Activated B cell treated with CpG ODN at 0.5 μM for 24 hours (primary cell): ENCODE measurements at regions of chr9 and their contacts with region 1.

Region 1: GRCh38 chr9:128818099-128818838 is at the start of gene ENDOG:
- DNase-seq: peak; percentile 98
- ATAC-seq: peak; percentile 95
- H3K4me3 Mint-ChIP-seq: peak within 1 kb of the TSS; percentile 87
- H3K27ac Mint-ChIP-seq: peak within 1 kb of the TSS; percentile 87
- H3K4me1 Mint-ChIP-seq: peaks cover 15% of the 10 kb centered on the region
- H3K27me3 Mint-ChIP-seq: no peaks in the 10 kb centered on the region
- CTCF ChIP-seq: no peak
- total RNA-seq, gene ENDOG: 14.6 and 16.9 TPM in 2 replicates

Region 2: DNA sequence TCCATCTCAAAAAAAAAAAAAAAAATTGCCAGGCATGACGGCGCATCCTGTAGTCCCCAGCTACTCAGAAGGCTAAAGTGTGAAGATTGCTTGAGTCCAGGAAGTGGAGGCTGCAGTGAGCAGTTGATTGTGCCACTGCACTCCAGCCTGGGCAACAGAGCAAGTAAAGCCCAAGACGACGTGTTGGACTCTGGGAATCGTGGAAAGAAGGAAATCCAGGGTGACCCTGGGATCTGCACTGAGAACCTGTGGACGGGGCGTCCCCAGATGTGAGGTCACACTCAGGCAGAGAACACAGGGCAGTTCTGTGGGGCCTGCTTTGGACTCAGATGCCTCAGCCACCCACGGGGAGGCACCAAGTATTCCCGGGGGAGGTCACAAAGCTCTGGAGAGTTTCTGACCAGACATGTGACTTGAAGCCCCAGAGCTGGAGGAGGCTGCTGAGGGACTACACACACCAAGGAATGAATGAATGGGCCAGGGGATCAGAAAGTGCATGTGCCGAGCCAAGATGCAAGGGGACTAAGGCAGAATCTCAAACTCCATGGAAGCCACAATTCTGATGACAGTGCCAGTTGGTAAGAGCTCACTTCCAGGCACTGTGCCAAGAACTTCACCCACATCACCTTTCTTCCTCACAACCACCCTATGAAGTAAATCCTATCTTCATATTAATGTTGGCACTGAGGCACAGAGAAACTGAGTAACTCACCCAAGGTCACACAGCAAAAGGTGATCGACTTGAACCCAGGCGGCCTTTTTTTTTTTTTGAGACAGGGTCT is 174.6 kb before region 1 on chr9:
- CTCF ChIA-PET with region 1: no interaction called
- POLR2A ChIA-PET with region 1: interaction called, 3 read pairs
- intact Hi-C with region 1: loop called (anchors 2 kb)
- DNase-seq: peak; percentile 44
- ATAC-seq: peak; percentile 84
- H3K4me3 Mint-ChIP-seq: peak overlapping the region; percentile 45
- H3K27ac Mint-ChIP-seq: peak overlapping the region; percentile 84
- H3K4me1 Mint-ChIP-seq: peaks cover 23% of the 10 kb centered on the region
- H3K27me3 Mint-ChIP-seq: no peaks in the 10 kb centered on the region
- CTCF ChIP-seq: no peak

Region 3: GRCh38 chr9:128771745-128772519 is 46.3 kb before region 1 on chr9 and contains the start of gene ZER1:
- CTCF ChIA-PET with region 1: no interaction called
- POLR2A ChIA-PET with region 1: interaction called, 17 read pairs
- intact Hi-C with region 1: loop called (anchors 1 kb)
- DNase-seq: peak; percentile 96
- ATAC-seq: peak; percentile 93
- H3K4me3 Mint-ChIP-seq: peak within 1 kb of the TSS; percentile 92
- H3K27ac Mint-ChIP-seq: peak within 1 kb of the TSS; percentile 89
- H3K4me1 Mint-ChIP-seq: peaks cover 24% of the 10 kb centered on the region
- H3K27me3 Mint-ChIP-seq: no peaks in the 10 kb centered on the region
- CTCF ChIP-seq: no peak
- total RNA-seq, gene ZER1: 24.0 and 26.0 TPM in 2 replicates

Region 4: GRCh38 chr9:128829477-128830251 is 11.4 kb after region 1 on chr9 and contains the start of gene SPOUT1:
- CTCF ChIA-PET with region 1: interaction called, 12 read pairs
- POLR2A ChIA-PET with region 1: interaction called, 49 read pairs
- intact Hi-C with region 1: loop called (anchors 1 kb)
- DNase-seq: peak; percentile 92
- ATAC-seq: peak; percentile 99
- H3K4me3 Mint-ChIP-seq: peak within 1 kb of the TSS; percentile 94
- H3K27ac Mint-ChIP-seq: peak within 1 kb of the TSS; percentile 90
- H3K4me1 Mint-ChIP-seq: peaks cover 22% of the 10 kb centered on the region
- H3K27me3 Mint-ChIP-seq: no peaks in the 10 kb centered on the region
- CTCF ChIP-seq: no peak
- total RNA-seq, gene SPOUT1: 78.9 and 79.1 TPM in 2 replicates

Region 5: GRCh38 chr9:128947422-128948301 is 129.4 kb after region 1 on chr9 and contains the starts of genes DOLK and NUP188:
- CTCF ChIA-PET with region 1: interaction called, 4 read pairs
- POLR2A ChIA-PET with region 1: interaction called, 4 read pairs
- intact Hi-C with region 1: loop called (anchors 1 kb)
- DNase-seq: peak; percentile 100
- ATAC-seq: peak; percentile 86
- H3K4me3 Mint-ChIP-seq: peak within 1 kb of the TSS; percentile 98
- H3K27ac Mint-ChIP-seq: peak within 1 kb of the TSS; percentile 97
- H3K4me1 Mint-ChIP-seq: peaks cover 29% of the 10 kb centered on the region
- H3K27me3 Mint-ChIP-seq: no peaks in the 10 kb centered on the region
- CTCF ChIP-seq: no peak
- total RNA-seq, gene DOLK: 9.0 and 10.3 TPM in 2 replicates
- total RNA-seq, gene NUP188: 76.9 and 103 TPM in 2 replicates